Dendritic cell treated with granulocyte-macrophage colony-stimulating factor and Interleukin-4, amounts not matched to agents 40 ng/mL and 50 ng/mL, for 4 days (primary cell): ENCODE measurements at regions of chr5 and their contacts with region 1.

Region 1: GRCh38 chr5:172897481-172898217 is 61.6 kb upstream of the RPL26L1 start:
- H3K4me3 Mint-ChIP-seq: no peak overlapping the region
- H3K27ac Mint-ChIP-seq: no peak overlapping the region
- H3K4me1 Mint-ChIP-seq: peaks cover 10% of the 10 kb centered on the region
- H3K27me3 Mint-ChIP-seq: no peaks in the 10 kb centered on the region

Region 2: GRCh38 chr5:172849606-172850453 is 47.8 kb before region 1 on chr5:
- intact Hi-C with region 1: loop called (anchors 5 kb)
- H3K4me3 Mint-ChIP-seq: no peak overlapping the region
- H3K27ac Mint-ChIP-seq: no peak overlapping the region
- H3K4me1 Mint-ChIP-seq: peaks cover 64% of the 10 kb centered on the region
- H3K27me3 Mint-ChIP-seq: no peaks in the 10 kb centered on the region

Region 3: DNA sequence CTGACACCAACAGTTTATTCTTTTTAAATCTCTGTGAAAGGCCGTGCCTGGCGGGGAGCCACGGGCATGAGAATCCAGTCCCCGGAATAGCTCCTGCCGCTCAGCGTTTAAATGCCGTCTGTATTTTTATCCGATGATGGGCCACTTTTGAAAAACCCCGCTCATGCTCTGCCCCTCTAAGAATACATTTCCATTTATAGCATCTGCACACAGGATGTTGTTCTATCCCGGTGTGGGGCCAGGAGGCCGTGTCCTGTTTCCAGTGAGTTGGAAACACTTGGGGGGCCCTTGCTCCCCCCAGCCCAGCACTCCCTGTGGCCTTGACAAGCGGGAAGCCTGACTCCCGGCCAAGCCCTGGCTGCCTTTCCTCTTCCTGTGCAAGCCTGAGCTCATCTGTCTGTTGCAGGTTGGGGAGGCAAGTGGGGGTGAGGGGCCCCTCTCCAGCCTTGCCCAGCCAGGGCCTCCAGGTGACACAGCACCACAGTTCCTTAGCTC is 24.6 kb before region 1 on chr5:
- intact Hi-C with region 1: no loop called
- H3K4me3 Mint-ChIP-seq: no peak overlapping the region
- H3K27ac Mint-ChIP-seq: no peak overlapping the region
- H3K4me1 Mint-ChIP-seq: peaks cover 8% of the 10 kb centered on the region
- H3K27me3 Mint-ChIP-seq: no peaks in the 10 kb centered on the region